Stomach (tissue), 19 donors: ENCODE measurements at regions of chr5 and their contacts with region 1.

Region 1: GRCh38 chr5:66981266-66982055 is 215.1 kb downstream of the CD180 start:
- DNase-seq: no peak
- H3K4me3 ChIP-seq: no peak overlapping the region
- H3K27ac ChIP-seq: peak overlapping the region in 1 of 5 donors; percentile 22
- H3K4me1 ChIP-seq: peaks cover 0 to 20% (median 3%) of the 10 kb centered on the region in 4 donors
- H3K27me3 ChIP-seq: no peaks in the 10 kb centered on the region
- CTCF ChIP-seq: no peak
- EP300 ChIP-seq: no peak
- POLR2A ChIP-seq: no peak

Region 2: GRCh38 chr5:67149951-67150523 is 168.6 kb after region 1 on chr5:
- intact Hi-C with region 1: loop called (anchors 5 kb)
- DNase-seq: peak in 1 of 2 donors; percentile 47
- H3K4me3 ChIP-seq: peak overlapping the region in 2 of 4 donors; percentile 3 to 8
- H3K27ac ChIP-seq: peak overlapping the region in 1 of 5 donors; percentile 23
- H3K4me1 ChIP-seq: peaks cover 0 to 5% (median 0%) of the 10 kb centered on the region in 4 donors
- H3K27me3 ChIP-seq: no peaks in the 10 kb centered on the region
- CTCF ChIP-seq: peak in 2 of 7 experiments; percentile 27 to 42
- EP300 ChIP-seq: no peak
- POLR2A ChIP-seq: no peak